ENCODE measurements at regions of chr13 and their contacts with region 1.

Region 1: DNA sequence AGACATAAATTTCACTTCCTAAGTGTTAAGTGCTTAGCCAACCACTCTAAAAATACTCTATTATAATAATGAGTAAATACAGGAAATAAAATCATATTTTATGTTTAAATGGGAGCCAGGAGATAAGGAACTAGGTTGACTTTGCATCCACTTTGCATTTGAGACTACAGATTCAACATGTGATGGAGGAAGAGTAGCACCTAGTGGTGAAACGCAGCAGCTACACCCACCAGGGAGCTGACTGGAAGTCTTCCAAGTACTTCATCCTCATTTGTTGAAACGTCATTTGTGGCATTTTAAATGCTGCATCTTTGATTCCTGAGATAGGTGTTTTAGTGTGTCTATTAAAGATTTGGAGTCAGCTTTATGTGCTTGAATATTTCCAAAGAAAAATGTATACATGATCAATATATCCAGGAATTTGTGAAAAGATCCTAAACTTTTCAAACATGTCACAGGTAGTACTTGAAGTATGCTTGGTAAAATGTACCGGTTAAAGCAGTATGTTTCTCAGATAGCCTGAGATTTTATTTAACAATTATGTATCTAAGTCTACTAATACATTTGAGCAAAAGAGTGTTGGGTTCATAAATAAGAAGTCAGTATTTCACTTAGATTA is 17.4 kb upstream of the KCTD12 start:
- DNase-seq: peak; percentile 72 to 80
- H3K4me3 ChIP-seq: no peak overlapping the region
- H3K4me3 Mint-ChIP-seq: no peak overlapping the region
- H3K27ac Mint-ChIP-seq: no peak overlapping the region
- H3K4me1 ChIP-seq: no peaks in the 10 kb centered on the region
- H3K4me1 Mint-ChIP-seq: no peaks in the 10 kb centered on the region
- H3K27me3 ChIP-seq: no peaks in the 10 kb centered on the region; the same call in 1 of the 2 replicates
- H3K27me3 Mint-ChIP-seq: peaks cover 15% of the 10 kb centered on the region
- CTCF ChIP-seq: peak; percentile 91 to 99

Region 2: DNA sequence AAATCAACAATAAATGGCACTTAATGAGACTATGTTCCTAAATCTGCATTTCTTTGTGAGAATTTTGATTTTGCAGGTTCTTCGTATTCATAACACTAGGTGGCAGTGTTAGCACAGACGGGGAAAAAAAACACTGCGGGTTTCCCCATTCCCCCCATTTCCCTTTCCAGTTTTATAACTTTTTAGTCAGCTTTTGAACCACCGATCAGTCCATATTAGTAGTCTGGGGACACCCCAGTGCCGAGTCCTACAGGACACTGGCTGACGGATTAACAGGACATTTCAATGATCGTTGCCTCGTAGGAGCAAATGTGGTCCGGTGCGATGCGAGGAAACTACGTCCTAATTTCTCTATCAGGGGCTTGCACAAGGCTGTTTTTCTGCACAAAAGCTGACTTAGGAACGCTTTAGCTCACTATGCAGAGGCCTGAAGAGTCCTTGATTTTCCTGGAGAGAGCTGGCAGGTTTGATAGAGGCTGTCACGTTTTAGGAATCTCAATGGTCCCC is 1033.2 kb before region 1 on chr13:
- CTCF ChIA-PET with region 1: interaction called, 5 read pairs
- POLR2A ChIA-PET with region 1: no interaction called
- intact Hi-C with region 1: loop called (anchors 1 kb)
- DNase-seq: peak in 1 of 2 experiments; percentile 46
- H3K4me3 ChIP-seq: no peak overlapping the region
- H3K4me3 Mint-ChIP-seq: peak overlapping the region; percentile 36
- H3K27ac Mint-ChIP-seq: no peak overlapping the region
- H3K4me1 ChIP-seq: no peaks in the 10 kb centered on the region
- H3K4me1 Mint-ChIP-seq: peaks cover 13% of the 10 kb centered on the region
- H3K27me3 ChIP-seq: no peaks in the 10 kb centered on the region
- H3K27me3 Mint-ChIP-seq: no peaks in the 10 kb centered on the region
- CTCF ChIP-seq: peak; percentile 71 to 85

Region 3: GRCh38 chr13:76667551-76667950 is 236.1 kb before region 1 on chr13:
- CTCF ChIA-PET with region 1: interaction called, 9 read pairs
- POLR2A ChIA-PET with region 1: no interaction called
- intact Hi-C with region 1: loop called (anchors 1 kb)
- DNase-seq: peak in 1 of 2 experiments; percentile 6
- H3K4me3 ChIP-seq: no peak overlapping the region
- H3K4me3 Mint-ChIP-seq: no peak overlapping the region
- H3K27ac Mint-ChIP-seq: no peak overlapping the region
- H3K4me1 ChIP-seq: no peaks in the 10 kb centered on the region
- H3K4me1 Mint-ChIP-seq: no peaks in the 10 kb centered on the region
- H3K27me3 ChIP-seq: no peaks in the 10 kb centered on the region
- H3K27me3 Mint-ChIP-seq: peaks cover 8% of the 10 kb centered on the region
- CTCF ChIP-seq: peak in 1 of 2 experiments; percentile 9

Region 4: GRCh38 chr13:76822698-76823267 is 80.9 kb before region 1 on chr13:
- CTCF ChIA-PET with region 1: interaction called, 8 read pairs
- POLR2A ChIA-PET with region 1: no interaction called
- intact Hi-C with region 1: loop called (anchors 1 kb)
- DNase-seq: no peak
- H3K4me3 ChIP-seq: no peak overlapping the region
- H3K4me3 Mint-ChIP-seq: no peak overlapping the region
- H3K27ac Mint-ChIP-seq: no peak overlapping the region
- H3K4me1 ChIP-seq: no peaks in the 10 kb centered on the region
- H3K4me1 Mint-ChIP-seq: no peaks in the 10 kb centered on the region
- H3K27me3 ChIP-seq: no peaks in the 10 kb centered on the region
- H3K27me3 Mint-ChIP-seq: peaks cover 3% of the 10 kb centered on the region
- CTCF ChIP-seq: peak in 1 of 2 experiments; percentile 18

Region 5: GRCh38 chr13:76874479-76874878 is 29.2 kb before region 1 on chr13:
- CTCF ChIA-PET with region 1: no interaction called
- POLR2A ChIA-PET with region 1: no interaction called
- intact Hi-C with region 1: no loop called
- DNase-seq: no peak
- H3K4me3 ChIP-seq: no peak overlapping the region
- H3K4me3 Mint-ChIP-seq: no peak overlapping the region
- H3K27ac Mint-ChIP-seq: no peak overlapping the region
- H3K4me1 ChIP-seq: no peaks in the 10 kb centered on the region
- H3K4me1 Mint-ChIP-seq: no peaks in the 10 kb centered on the region
- H3K27me3 ChIP-seq: peaks cover 1% of the 10 kb centered on the region; the same call in 1 of the 2 replicates
- H3K27me3 Mint-ChIP-seq: peaks cover 26% of the 10 kb centered on the region
- CTCF ChIP-seq: no peak

Region 6: DNA sequence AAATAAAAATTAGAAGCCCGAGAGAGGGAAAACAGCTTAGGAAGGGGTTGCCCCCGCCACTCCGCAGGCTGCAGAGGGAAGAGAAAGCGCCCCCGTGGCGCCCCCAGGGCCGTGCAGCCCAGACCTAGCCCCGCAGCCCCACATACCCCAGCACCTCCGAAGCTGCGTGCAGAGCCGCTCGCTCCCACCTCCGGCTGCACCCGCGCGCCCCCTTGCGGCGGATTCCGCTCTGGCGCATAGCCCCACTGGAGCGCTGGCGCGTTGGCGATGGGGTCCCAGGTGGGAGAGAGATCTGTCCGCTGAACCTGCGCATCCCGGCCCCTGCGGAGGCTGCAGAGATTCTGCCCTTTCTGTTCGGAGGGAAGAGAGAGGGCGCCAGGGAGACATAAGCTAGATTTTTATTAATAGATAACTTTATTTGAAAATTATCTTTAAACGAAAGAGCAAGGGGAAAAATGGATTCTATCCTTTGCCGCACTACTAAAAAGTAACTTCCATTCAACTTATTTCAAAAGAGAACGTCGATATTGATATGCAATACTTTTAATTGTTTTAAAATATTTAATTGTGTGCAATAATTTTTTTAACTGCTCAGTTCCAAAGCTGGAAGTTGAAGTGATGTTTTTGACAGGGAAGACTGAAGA is 76.5 kb after region 1 on chr13:
- CTCF ChIA-PET with region 1: no interaction called
- POLR2A ChIA-PET with region 1: no interaction called
- intact Hi-C with region 1: loop called (anchors 1 kb)
- DNase-seq: peak; percentile 79 to 92
- H3K4me3 ChIP-seq: peak overlapping the region; percentile 32
- H3K4me3 Mint-ChIP-seq: no peak overlapping the region
- H3K27ac Mint-ChIP-seq: no peak overlapping the region
- H3K4me1 ChIP-seq: no peaks in the 10 kb centered on the region; the same call in 1 of the 2 replicates
- H3K4me1 Mint-ChIP-seq: no peaks in the 10 kb centered on the region
- H3K27me3 ChIP-seq: no peaks in the 10 kb centered on the region
- H3K27me3 Mint-ChIP-seq: peaks cover 26% of the 10 kb centered on the region
- CTCF ChIP-seq: peak; percentile 95 to 99

Measured in Caco-2 (cell line).